Naive thymus-derived CD4-positive, alpha-beta T cell (primary cell): ENCODE measurements at regions of chr4 and their contacts with region 1.

Region 1: DNA sequence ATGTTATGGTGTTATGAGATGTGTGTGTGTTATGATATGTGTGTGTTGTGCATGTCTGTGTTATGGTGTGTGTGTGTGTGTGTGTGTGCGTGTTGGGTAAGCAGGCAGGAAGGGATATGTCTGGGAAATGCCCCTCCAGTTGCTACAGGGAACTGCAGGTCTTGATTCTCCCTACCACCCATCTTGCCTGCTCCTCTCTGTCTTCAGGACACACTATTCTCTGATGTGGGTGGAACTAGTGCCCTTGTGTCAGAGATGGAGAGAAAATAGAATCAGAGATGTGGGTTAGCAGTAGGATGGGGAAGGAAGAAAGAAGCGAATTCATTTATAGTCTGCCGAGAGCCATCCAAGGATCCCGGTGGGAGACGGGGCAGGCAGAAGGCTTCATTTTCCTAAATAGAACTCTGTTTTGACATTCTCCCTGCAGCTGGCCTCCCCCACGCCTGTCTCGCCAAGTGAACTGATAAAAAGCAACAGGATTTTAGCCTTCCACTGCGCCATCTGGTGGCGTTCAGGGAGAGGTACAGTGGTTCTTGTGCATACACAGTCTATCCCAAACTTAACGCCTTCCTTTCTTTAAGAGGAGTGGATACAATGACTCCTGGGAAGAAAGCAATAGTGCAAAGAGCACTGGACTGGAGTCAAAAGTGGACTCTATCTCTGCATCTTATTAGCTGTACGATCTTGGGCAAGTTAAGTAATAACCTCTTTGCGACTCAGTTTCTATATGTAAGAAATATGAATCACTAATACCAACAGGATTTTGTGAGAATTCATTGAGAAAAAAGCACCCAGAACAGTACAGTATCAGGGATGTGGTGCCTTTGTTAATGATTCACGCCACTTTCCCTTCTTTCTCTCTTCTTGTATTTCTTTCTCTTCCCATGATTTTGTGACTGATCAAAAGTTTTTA is 14.1 kb upstream of the MGST2 start:
- DNase-seq: peak; percentile 32 to 69 (median 57)
- ATAC-seq: peak; percentile 91
- H3K4me3 ChIP-seq: no peak overlapping the region
- H3K4me3 Mint-ChIP-seq: peak overlapping the region in 6 of 10 donors; percentile 0 to 46 (median 26)
- H3K27ac ChIP-seq: no peak overlapping the region
- H3K27ac Mint-ChIP-seq: peak overlapping the region in 1 of 9 donors; percentile 56
- H3K4me1 ChIP-seq: no peaks in the 10 kb centered on the region
- H3K4me1 Mint-ChIP-seq: peaks cover 0 to 13% (median 5%) of the 10 kb centered on the region in 7 donors
- H3K27me3 ChIP-seq: no peaks in the 10 kb centered on the region
- H3K27me3 Mint-ChIP-seq: peaks cover 0 to 9% (median 5%) of the 10 kb centered on the region in 5 donors

Region 2: GRCh38 chr4:139015269-139015947 is 636.1 kb before region 1 on chr4 and contains the start of gene NOCT:
- CTCF ChIA-PET with region 1: no interaction called
- POLR2A ChIA-PET with region 1: no interaction called
- intact Hi-C with region 1: loop called (anchors 5 kb)
- DNase-seq: peak; percentile 82 to 92 (median 89)
- ATAC-seq: peak; percentile 94
- H3K4me3 ChIP-seq: peak within 1 kb of the TSS; percentile 65
- H3K4me3 Mint-ChIP-seq: peak within 1 kb of the TSS; percentile 82 to 93 (median 88)
- H3K27ac ChIP-seq: peak within 1 kb of the TSS; percentile 91
- H3K27ac Mint-ChIP-seq: peak within 1 kb of the TSS; percentile 76 to 99 (median 94)
- H3K4me1 ChIP-seq: peaks cover 7 to 10% of the 10 kb centered on the region in 2 donors
- H3K4me1 Mint-ChIP-seq: peaks cover 14 to 44% (median 24%) of the 10 kb centered on the region in 7 donors
- H3K27me3 ChIP-seq: no peaks in the 10 kb centered on the region
- H3K27me3 Mint-ChIP-seq: no peaks in the 10 kb centered on the region
- total RNA-seq, gene NOCT: 1.6 to 33.7 (median 8.8) TPM

Region 3: DNA sequence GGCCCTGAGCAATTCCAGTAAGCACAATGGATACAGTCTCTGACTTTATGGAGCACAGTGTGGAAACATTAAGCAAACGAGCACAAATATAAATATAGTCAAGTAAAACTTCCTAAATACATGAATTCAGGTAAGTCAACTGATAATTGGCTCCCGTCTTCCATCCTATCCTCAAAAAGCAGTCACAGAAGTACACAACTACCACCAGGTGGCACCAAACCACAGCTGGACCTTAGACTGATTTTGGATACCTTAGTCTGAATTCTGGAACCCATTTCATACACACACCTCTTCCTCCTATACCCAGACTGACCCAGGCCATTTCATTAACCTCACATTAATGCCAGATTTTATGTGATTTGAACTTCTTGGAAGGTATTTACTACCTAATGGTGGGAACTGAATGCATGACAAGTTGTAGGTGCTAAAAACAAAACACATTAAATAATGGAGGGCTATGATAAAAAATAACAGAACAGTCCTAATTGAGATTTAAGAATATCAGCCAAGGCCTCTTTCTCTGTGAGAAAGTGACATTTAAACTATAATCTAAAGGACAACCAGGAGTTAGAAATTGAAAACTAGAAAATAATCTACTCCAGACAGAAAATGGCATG is 552.1 kb before region 1 on chr4:
- CTCF ChIA-PET with region 1: no interaction called
- POLR2A ChIA-PET with region 1: no interaction called
- intact Hi-C with region 1: loop called in 1 of 2 experiments (anchors 1 kb)
- DNase-seq: peak; percentile 37 to 81 (median 71)
- ATAC-seq: peak; percentile 94
- H3K4me3 ChIP-seq: no peak overlapping the region
- H3K4me3 Mint-ChIP-seq: no peak overlapping the region
- H3K27ac ChIP-seq: no peak overlapping the region
- H3K27ac Mint-ChIP-seq: no peak overlapping the region
- H3K4me1 ChIP-seq: no peaks in the 10 kb centered on the region
- H3K4me1 Mint-ChIP-seq: peaks cover 0 to 6% (median 0%) of the 10 kb centered on the region in 7 donors
- H3K27me3 ChIP-seq: no peaks in the 10 kb centered on the region
- H3K27me3 Mint-ChIP-seq: no peaks in the 10 kb centered on the region

Region 4: DNA sequence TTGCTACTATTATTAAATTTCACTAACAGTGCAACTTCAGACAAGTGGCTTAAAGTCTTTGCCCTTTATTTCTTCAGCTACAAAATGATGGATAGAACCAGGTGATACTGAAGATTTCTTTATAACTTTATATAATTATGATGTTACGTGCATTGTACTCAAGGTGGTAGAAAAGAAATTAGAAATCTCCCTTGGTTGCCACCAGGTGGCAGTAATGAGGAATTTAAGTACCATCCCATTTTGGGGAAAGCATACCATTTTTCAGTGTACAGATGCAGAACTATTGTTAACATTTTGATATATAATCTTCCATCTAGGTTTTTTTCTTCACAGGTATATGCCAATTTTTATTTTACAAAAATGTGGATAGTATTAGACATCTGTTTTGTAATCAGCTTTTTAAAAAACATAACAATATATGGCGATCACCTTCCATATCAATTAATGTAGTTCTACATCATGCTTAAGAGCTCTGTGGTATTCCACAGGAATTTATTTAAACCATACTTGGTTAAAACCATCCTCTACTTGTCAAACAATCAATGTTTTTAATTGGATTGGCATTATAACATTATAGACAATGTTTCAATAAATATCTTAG is 235.4 kb before region 1 on chr4:
- CTCF ChIA-PET with region 1: interaction called, 3 read pairs
- POLR2A ChIA-PET with region 1: no interaction called
- intact Hi-C with region 1: loop called (anchors 1 to 5 kb)
- DNase-seq: peak in 6 of 9 donors; percentile 5 to 46 (median 43)
- ATAC-seq: peak; percentile 72
- H3K4me3 ChIP-seq: no peak overlapping the region
- H3K4me3 Mint-ChIP-seq: no peak overlapping the region
- H3K27ac ChIP-seq: no peak overlapping the region
- H3K27ac Mint-ChIP-seq: no peak overlapping the region
- H3K4me1 ChIP-seq: no peaks in the 10 kb centered on the region
- H3K4me1 Mint-ChIP-seq: peaks cover 0 to 19% (median 12%) of the 10 kb centered on the region in 7 donors
- H3K27me3 ChIP-seq: no peaks in the 10 kb centered on the region
- H3K27me3 Mint-ChIP-seq: no peaks in the 10 kb centered on the region

Region 5: GRCh38 chr4:139554893-139555704 is 96.4 kb before region 1 on chr4:
- CTCF ChIA-PET with region 1: interaction called, 5 read pairs
- POLR2A ChIA-PET with region 1: no interaction called
- intact Hi-C with region 1: loop called (anchors 2 kb)
- DNase-seq: peak; percentile 65 to 93 (median 88)
- ATAC-seq: peak; percentile 85
- H3K4me3 ChIP-seq: peak overlapping the region; percentile 68
- H3K4me3 Mint-ChIP-seq: peak overlapping the region; percentile 89 to 99 (median 98)
- H3K27ac ChIP-seq: peak overlapping the region; percentile 76
- H3K27ac Mint-ChIP-seq: peak overlapping the region; percentile 86 to 98 (median 97)
- H3K4me1 ChIP-seq: peaks cover 4 to 11% of the 10 kb centered on the region in 2 donors
- H3K4me1 Mint-ChIP-seq: peaks cover 19 to 49% (median 40%) of the 10 kb centered on the region in 7 donors
- H3K27me3 ChIP-seq: no peaks in the 10 kb centered on the region
- H3K27me3 Mint-ChIP-seq: peaks cover 0 to 11% (median 0%) of the 10 kb centered on the region in 5 donors

Region 6: GRCh38 chr4:140012688-140013486 is 361.3 kb after region 1 on chr4:
- CTCF ChIA-PET with region 1: no interaction called
- POLR2A ChIA-PET with region 1: no interaction called
- intact Hi-C with region 1: loop called (anchors 1 to 10 kb)
- DNase-seq: peak; percentile 7 to 77 (median 66)
- ATAC-seq: peak; percentile 94
- H3K4me3 ChIP-seq: no peak overlapping the region
- H3K4me3 Mint-ChIP-seq: peak overlapping the region in 1 of 10 donors; percentile 1
- H3K27ac ChIP-seq: no peak overlapping the region
- H3K27ac Mint-ChIP-seq: peak overlapping the region in 1 of 9 donors; percentile 11
- H3K4me1 ChIP-seq: no peaks in the 10 kb centered on the region
- H3K4me1 Mint-ChIP-seq: peaks cover 5 to 9% (median 8%) of the 10 kb centered on the region in 7 donors
- H3K27me3 ChIP-seq: no peaks in the 10 kb centered on the region
- H3K27me3 Mint-ChIP-seq: peaks cover 0 to 39% (median 0%) of the 10 kb centered on the region in 5 donors

Region 7: GRCh38 chr4:140326395-140326993 is 675.0 kb after region 1 on chr4:
- CTCF ChIA-PET with region 1: no interaction called
- POLR2A ChIA-PET with region 1: no interaction called
- intact Hi-C with region 1: no loop called
- DNase-seq: no peak
- ATAC-seq: no peak
- H3K4me3 ChIP-seq: no peak overlapping the region
- H3K4me3 Mint-ChIP-seq: no peak overlapping the region
- H3K27ac ChIP-seq: no peak overlapping the region
- H3K27ac Mint-ChIP-seq: no peak overlapping the region
- H3K4me1 ChIP-seq: no peaks in the 10 kb centered on the region
- H3K4me1 Mint-ChIP-seq: peaks cover 0 to 11% (median 3%) of the 10 kb centered on the region in 7 donors
- H3K27me3 ChIP-seq: no peaks in the 10 kb centered on the region
- H3K27me3 Mint-ChIP-seq: peaks cover 0 to 28% (median 4%) of the 10 kb centered on the region in 5 donors